ENCODE measurements at regions of chr10 and their contacts with region 1.

Region 1: DNA sequence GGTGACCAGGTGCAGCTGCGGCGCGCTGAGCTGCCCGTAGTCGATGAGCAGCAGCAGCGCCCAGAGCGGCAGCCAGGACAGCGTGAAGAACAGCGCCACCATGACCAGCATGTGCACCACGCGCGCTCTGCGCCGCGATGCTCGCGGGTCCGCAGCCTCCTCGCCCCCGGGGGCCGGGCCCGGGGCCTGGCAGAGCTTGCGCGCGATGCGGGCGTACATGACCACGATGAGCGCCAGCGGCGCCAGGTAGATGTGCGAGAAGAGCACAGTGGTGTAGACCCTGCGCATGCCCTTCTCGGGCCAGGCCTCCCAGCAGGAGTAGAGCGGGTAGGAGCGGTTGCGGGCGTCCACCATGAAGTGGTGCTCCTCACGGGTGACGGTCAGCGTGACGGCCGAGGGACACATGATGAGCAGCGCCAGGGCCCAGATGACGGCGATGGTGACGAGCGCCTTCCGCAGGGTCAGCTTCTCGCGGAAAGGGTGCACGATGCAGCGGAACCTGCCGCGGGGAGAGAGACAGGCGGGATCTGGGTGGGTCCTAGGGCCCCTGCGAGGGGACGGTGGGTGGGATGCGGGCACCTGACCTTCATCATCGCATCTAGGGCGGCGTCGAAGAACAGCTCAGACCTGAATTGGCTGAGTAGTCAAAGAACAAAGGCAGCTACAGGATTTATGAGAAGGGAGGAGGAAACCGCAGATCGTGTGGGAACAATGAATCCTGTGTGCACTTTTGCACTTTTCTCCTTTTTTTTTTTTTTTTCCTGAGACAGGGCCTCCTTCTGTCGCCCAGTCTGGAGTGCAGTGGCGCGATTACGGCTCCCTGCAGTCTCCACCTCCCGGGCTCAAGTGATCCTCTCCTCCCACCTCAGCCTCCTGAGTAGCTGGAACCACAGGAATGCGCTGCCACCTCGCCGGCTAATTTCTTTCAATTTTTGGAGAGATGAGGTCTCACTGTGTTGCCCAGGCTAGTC is 22.4 kb upstream of the PPA1 start:
- DNase-seq: peak; percentile 89
- H3K4me3 Mint-ChIP-seq: peak overlapping the region; percentile 36
- H3K27ac Mint-ChIP-seq: peak overlapping the region; percentile 60
- H3K4me1 Mint-ChIP-seq: peaks cover 54% of the 10 kb centered on the region
- H3K27me3 Mint-ChIP-seq: no peaks in the 10 kb centered on the region
- CTCF ChIP-seq: no peak

Region 2: GRCh38 chr10:70233109-70233938 is 22.3 kb before region 1 on chr10 and contains the start of gene PPA1:
- CTCF ChIA-PET with region 1: interaction called, 10 read pairs
- intact Hi-C with region 1: no loop called
- DNase-seq: peak; percentile 100
- H3K4me3 Mint-ChIP-seq: peak within 1 kb of the TSS; percentile 75
- H3K27ac Mint-ChIP-seq: peak within 1 kb of the TSS; percentile 97
- H3K4me1 Mint-ChIP-seq: peaks cover 7% of the 10 kb centered on the region
- H3K27me3 Mint-ChIP-seq: no peaks in the 10 kb centered on the region
- CTCF ChIP-seq: no peak
- total RNA-seq, gene PPA1: 260 and 280 TPM in 2 replicates

Region 3: GRCh38 chr10:70324339-70324861 is 68.8 kb after region 1 on chr10:
- CTCF ChIA-PET with region 1: no interaction called
- intact Hi-C with region 1: no loop called
- DNase-seq: no peak
- H3K4me3 Mint-ChIP-seq: no peak overlapping the region
- H3K27ac Mint-ChIP-seq: no peak overlapping the region
- H3K4me1 Mint-ChIP-seq: peaks cover 12% of the 10 kb centered on the region
- H3K27me3 Mint-ChIP-seq: no peaks in the 10 kb centered on the region
- CTCF ChIP-seq: no peak

Region 4: DNA sequence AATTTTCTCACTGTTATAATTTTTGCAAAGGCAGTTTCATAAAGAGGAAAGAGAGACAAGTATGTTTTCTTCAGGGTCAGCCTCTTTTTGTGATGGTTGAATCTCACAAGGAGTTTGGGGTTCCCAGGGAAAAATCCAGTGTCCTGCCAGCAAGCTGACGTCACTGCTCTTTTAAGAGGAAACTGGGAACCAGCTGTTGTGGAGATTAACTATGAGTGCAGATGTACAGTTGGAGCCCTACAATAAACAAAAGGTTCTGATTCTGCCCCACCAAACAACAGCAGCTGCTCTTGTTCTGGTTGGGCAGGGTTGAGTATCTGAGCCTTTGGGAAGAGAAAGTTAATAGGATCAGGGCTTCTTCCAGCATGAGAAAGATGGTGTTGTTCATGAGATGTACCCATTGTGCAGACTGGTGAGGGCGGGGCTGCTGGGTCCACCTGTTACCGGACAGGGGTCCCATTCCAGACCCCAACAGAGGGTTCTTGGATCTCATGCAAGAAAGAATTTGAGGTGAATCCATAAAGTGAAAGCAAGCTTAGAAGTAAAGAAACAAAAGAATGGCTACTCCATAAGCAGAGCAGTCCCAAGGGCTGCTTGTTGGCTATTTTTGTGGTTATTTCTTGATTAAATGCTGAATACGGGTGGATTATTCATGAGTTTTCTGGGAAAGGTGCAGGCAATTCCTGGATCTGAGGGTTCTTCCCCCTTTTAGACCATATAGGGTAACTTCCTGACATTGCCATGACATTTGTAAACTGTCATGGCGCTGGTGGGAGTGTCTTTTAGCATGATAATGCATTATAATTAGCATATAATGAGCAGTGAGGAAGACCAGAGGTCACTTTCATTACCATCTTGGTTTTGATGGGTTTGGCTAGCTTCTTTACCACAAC is 334.4 kb after region 1 on chr10:
- CTCF ChIA-PET with region 1: no interaction called
- intact Hi-C with region 1: no loop called
- DNase-seq: no peak
- H3K4me3 Mint-ChIP-seq: no peak overlapping the region
- H3K27ac Mint-ChIP-seq: no peak overlapping the region
- H3K4me1 Mint-ChIP-seq: no peaks in the 10 kb centered on the region
- H3K27me3 Mint-ChIP-seq: peaks cover 100% of the 10 kb centered on the region
- CTCF ChIP-seq: no peak